ENCODE measurements at regions of chr5 and their contacts with region 1.

Region 1: GRCh38 chr5:150511578-150512367 is 3.8 kb downstream of the NDST1 start:
- DNase-seq: peak; percentile 73
- H3K4me3 ChIP-seq: no peak overlapping the region
- H3K27me3 ChIP-seq: no peaks in the 10 kb centered on the region
- CTCF ChIP-seq: no peak

Region 2: DNA sequence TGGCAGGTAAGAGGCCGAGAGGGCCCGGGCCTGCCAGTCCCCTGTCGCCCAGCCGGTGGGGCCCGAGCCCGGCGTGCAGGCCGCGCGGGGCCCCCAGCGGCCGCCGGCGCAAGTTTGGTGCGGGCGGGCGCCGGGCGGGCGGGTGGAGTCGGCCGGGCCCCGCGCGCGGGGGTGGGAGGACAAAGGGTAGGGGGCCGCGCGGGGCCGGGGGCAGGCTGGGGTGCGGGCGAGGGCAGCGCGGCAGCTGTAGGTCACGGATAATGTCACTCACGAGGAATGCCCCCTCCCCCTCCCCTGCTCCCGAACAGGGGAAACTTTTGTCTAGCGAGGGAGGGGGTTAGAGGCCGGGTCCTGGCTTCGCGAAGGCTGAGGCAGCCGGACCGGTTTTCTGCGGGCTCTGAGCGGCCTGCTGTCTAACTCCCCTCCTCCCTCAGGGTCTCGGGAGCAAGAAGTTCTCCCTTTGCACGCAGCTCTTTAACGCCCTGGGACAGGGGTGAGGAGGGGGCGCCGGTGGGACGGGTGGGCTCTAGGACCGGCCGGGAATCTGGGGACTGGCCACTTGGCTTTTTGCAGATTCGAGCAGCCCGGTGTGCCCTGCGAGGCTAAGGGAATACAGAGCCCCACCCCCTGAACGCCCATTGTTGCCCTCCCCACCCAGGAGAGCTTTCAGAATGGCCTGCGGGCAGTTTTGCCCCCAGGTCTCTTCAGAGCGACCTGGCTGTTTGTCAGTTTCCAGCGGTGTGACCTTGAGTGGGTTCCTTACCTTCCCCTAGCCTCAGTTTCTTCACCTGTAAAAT is 25.2 kb before region 1 on chr5:
- CTCF ChIA-PET with region 1: interaction called, 11 read pairs
- POLR2A ChIA-PET with region 1: no interaction called
- DNase-seq: no peak
- H3K4me3 ChIP-seq: peak overlapping the region; percentile 97
- H3K27me3 ChIP-seq: no peaks in the 10 kb centered on the region
- CTCF ChIP-seq: no peak

Region 3: DNA sequence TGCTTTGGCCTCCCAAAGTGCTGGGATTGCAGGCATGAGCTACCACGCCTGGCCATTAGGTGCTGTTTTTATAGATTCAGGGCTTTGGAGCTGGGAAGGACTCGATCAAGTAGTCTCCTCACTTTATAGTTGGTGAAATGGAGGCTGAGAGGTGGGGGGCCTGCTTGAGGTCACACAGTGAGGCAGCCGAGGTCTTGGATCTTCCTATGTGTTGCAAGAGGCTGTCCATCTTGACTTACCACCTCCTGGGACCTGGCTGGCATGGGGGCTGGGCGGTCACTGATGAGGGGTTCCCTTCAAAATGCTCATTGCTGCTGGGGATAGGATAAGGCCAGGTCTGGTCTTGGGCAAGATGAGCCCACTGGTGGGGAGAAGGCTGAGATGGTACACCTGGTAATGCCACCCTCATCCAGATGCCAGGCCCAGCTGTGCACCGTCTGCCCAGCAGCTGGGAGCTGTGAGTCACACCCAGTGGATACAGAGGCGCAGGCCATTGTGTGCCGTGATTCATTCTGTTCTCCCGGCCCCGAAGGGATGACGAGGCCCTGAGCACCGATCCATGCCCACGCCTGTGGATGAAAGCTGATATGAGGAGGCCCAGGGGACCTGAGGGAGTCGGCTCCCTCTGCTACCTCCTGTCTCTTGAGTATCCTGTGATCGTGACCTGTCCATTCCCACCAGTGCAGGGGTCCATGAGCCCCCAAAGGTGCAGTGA is 14.3 kb before region 1 on chr5:
- CTCF ChIA-PET with region 1: interaction called, 10 read pairs
- POLR2A ChIA-PET with region 1: interaction called, 6 read pairs
- DNase-seq: peak; percentile 66
- H3K4me3 ChIP-seq: no peak overlapping the region
- H3K27me3 ChIP-seq: no peaks in the 10 kb centered on the region
- CTCF ChIP-seq: no peak

Region 4: DNA sequence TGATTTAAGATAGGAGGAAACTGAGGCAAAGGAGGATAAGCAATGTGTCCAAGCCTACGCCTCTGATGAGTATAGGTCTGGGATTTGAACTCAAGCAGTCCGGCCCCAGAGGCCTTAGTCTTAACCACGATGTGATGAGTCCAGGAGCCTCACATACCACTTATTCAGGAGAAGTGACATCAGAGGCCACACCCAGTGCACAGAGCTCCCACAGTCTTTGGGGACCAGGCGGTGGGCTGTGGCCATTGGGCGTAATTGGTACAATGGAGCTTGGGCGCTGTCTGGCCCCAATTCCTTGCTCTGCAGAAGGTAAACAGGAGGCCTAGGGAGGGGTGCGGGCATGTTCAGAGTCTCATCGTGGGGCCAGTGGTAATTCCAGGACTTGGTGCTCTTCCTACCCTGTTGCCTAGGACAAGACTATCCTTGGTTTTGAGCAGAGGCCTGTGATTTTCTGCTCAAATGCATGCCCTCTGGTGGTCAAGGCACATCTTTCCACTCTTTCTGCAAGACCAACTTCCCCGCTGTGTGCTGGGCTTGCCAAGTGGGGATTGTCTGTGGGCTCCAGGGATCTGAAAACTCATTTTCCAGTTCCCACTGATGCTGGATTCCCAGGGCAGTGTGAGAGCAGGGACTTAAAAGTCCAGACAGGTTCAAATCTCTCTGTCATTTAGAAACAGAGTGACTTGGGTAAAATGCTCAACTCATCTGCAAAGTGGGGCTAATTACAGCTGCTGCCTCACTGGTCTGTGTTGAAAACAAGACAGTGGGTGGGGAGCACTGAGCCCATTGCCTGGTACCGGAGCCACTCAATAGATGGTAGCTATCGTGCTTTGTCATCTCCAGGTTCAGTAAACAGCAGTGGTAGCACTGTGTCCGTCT is 11.9 kb after region 1 on chr5:
- CTCF ChIA-PET with region 1: interaction called, 12 read pairs
- POLR2A ChIA-PET with region 1: no interaction called
- DNase-seq: no peak
- H3K4me3 ChIP-seq: no peak overlapping the region
- H3K27me3 ChIP-seq: no peaks in the 10 kb centered on the region
- CTCF ChIP-seq: peak; percentile 74

Region 5: GRCh38 chr5:150534811-150535210 is 23.0 kb after region 1 on chr5:
- CTCF ChIA-PET with region 1: no interaction called
- POLR2A ChIA-PET with region 1: no interaction called
- DNase-seq: no peak
- H3K4me3 ChIP-seq: no peak overlapping the region
- H3K27me3 ChIP-seq: no peaks in the 10 kb centered on the region
- CTCF ChIP-seq: no peak

Measured in BJ (cell line).